BJ (cell line): ENCODE measurements at regions of chr12 and their contacts with region 1.

Region 1: DNA sequence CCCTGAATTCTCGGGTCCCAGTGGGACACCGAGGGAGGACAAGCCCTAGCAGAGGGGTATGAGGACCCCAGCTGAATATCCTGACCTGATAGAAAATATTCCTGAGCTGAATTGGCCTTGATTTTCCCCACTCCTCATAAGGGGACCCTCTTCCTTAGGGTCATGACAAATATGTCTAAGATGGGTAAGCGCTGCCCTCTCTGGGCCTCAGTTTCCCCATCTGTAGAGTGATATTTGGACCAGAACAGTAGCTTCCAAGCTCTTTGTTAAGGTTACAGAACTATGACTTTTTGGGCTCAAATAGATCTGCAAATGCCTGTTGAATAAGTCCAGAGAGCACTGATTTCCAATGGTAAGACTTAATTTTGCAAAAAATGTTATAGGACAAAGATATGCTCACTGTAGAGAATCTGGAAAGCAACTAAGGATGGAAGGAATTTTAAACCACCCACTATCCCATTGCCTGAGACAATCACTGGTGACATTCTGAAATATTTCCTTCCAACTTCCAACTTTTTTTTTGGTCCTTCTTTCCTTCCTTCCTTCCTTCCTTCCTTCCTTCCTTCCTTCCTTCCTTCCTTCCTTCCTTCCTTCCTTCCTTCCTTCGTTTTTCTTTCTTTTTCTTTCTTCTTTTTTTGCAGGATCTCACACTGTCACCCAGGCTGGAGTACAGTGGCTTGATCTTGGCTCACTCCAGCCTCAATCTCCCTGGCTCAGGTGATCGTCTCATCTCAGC is 32.0 kb downstream of the MYL2 start:
- DNase-seq: no peak
- H3K4me3 ChIP-seq: no peak overlapping the region
- H3K27me3 ChIP-seq: no peaks in the 10 kb centered on the region
- CTCF ChIP-seq: no peak

Region 2: DNA sequence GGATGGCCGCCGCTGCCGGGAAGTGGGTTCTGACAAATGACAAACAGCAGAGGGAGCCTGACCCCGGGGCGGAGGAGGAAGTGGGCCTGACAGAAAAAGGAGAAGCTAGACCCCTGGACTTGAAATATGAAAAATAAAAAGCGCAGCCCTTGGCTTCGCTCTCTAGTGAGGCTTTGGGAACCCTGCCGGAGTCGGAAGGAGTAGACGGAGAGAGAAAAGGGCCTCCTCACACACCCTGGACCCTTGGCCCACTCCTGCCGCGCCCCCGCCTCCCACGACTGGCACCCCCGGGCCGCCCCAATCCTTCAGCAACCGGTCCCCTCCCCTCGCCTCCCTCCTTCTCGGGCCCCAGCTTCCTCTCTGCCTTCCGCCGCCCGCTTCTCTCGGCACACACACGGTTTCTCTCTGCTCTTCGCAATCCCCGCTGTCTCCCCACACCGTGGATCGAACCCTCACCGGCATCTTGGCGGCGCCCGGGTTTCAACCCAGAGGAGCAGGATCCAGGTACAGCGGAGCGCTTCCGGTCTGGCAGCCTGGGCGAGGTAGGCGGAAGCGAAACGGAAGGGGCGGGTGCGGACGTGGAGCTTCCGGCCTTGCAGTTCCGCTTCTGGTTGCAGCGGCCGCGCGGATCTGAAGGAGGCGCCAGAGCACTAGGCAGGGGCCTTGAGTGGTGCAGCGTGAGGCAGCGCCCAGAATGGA is 438.5 kb before region 1 on chr12 and contains the start of gene ARPC3:
- CTCF ChIA-PET with region 1: interaction called, 16 read pairs
- POLR2A ChIA-PET with region 1: no interaction called
- DNase-seq: peak; percentile 61
- H3K4me3 ChIP-seq: peak within 1 kb of the TSS; percentile 100
- H3K27me3 ChIP-seq: no peaks in the 10 kb centered on the region
- CTCF ChIP-seq: peak; percentile 94
- polyA plus RNA-seq, gene ARPC3: 22.7 and 50.9 TPM in 2 replicates

Region 3: GRCh38 chr12:110742096-110742717 is 146.2 kb before region 1 on chr12:
- CTCF ChIA-PET with region 1: no interaction called
- POLR2A ChIA-PET with region 1: no interaction called
- DNase-seq: no peak
- H3K4me3 ChIP-seq: peak overlapping the region; percentile 80
- H3K27me3 ChIP-seq: no peaks in the 10 kb centered on the region
- CTCF ChIP-seq: no peak

Region 4: DNA sequence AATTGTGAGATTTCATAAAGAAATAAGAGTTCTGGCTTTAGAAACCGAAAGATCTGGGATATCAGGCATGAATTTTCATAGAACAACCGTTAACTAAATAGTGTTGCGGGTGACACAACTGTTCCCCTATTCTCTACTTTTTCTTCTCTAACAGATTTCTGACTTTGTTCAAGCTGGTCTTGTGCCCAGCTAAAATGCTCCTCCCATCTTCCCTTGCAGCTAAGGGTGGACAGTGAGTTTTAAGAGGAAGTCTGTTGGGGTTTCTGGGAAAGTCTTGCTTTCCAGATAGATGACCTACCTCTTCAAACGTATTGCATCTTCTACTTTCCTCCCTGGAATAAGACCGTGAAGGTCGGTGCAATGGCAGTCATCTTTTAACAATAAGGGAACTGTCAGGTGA is 22.9 kb before region 1 on chr12:
- CTCF ChIA-PET with region 1: interaction called, 10 read pairs
- POLR2A ChIA-PET with region 1: no interaction called
- DNase-seq: no peak
- H3K4me3 ChIP-seq: no peak overlapping the region
- H3K27me3 ChIP-seq: no peaks in the 10 kb centered on the region; the same call in 1 of the 2 replicates
- CTCF ChIP-seq: no peak